ENCODE measurements at regions of chr1 and their contacts with region 1.

Region 1: DNA sequence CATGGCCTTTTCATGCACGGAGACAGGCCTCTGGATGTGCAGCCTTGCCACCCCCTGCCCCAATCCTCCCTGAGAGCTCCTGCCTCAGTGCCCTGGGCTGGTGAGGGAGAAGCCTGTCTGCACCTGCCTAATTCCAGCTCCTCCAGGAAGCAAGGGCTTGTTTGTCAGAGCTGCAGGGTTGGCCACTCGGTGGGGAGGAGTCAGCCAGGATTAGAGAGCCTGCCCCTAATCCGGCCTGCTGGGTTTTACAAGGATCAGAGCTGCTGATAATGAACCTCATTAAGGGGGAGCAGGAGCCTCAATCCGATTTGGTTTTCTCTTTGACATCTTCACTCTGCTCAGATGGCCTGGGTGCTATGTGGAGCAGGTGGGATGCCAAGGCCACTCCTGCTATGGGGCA is 31.9 kb upstream of the LHX4 start:
- DNase-seq: no peak

Region 2: GRCh38 chr1:180188091-180188506 is 10.1 kb before region 1 on chr1:
- CTCF ChIA-PET with region 1: interaction called, 11 read pairs
- POLR2A ChIA-PET with region 1: no interaction called
- DNase-seq: peak; percentile 80

Measured in HEK293T (cell line).